ENCODE measurements at regions of chr3 and their contacts with region 1.

Region 1: DNA sequence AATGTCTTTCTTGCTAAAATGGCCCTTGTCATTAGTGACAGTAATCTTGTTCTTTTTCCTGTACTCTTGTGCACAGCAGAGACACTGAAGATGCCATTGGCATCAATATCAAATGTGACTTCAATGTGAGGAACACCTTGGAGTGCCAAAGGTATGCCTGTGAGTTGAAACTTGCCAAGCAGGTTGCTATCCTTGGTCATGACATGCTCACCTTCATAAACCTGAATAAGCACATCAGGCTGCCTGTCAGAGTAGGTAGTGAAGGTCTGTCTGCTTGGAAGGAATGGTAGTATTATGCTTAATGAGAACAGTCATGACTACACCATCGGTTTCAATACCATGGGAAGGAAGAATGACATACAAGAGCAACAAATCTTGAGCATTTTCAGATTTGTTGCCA is 6.3 kb upstream of the RAB5A start:
- DNase-seq: no peak
- ATAC-seq: no peak
- H3K4me3 ChIP-seq: no peak overlapping the region
- H3K27ac ChIP-seq: no peak overlapping the region
- H3K4me1 ChIP-seq: peaks cover 0 to under 1% (median 0%) of the 10 kb centered on the region in 12 donors
- H3K27me3 ChIP-seq: no peaks in the 10 kb centered on the region
- CTCF ChIP-seq: no peak
- POLR2A ChIP-seq: no peak

Region 2: DNA sequence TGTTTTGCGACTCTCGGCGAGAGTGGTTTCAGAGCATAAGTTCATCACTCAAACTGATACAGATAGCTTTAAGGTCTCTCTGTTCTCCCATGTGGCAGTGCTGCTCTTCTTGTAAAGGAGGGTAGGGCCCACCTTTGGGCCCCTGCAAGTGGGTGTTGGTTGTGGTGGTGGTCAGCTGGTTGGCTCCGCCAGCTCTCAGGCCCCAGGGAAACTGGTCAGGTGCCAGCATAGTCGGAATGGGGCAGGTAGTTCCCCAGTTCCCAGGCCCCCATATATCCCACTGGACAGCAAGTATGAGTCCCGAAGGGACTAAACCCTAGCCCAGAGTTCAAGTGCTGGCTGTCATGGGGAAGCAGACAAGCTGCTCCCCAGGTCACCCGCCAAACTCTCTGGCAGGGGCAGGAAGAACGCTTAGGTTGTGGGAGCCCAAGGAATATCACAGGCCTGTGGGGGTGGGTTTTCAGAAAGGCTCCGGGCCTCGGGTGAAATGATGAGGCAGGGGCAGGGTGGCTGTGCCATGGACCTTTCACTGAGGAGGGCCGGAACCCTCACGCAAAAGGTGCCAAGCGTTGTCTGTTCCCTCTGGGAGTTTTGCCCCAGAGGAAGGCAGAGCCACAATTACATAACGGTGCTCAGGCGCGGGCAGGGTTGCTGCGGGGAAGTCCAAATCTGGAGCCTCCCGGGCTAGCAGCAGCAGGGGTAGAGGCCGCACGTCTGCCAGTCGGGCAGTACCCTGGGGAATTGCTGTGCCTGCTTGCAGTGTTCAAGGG is 191.7 kb before region 1 on chr3:
- intact Hi-C with region 1: no loop called
- DNase-seq: no peak
- ATAC-seq: no peak
- H3K4me3 ChIP-seq: no peak overlapping the region
- H3K27ac ChIP-seq: no peak overlapping the region
- H3K4me1 ChIP-seq: no peaks in the 10 kb centered on the region
- H3K27me3 ChIP-seq: peaks cover 0 to 2% (median 0%) of the 10 kb centered on the region in 9 donors
- CTCF ChIP-seq: no peak
- POLR2A ChIP-seq: no peak

Region 3: GRCh38 chr3:19891740-19892139 is 48.9 kb before region 1 on chr3:
- intact Hi-C with region 1: loop called in 5 of 10 experiments (anchors 5 kb)
- DNase-seq: no peak
- ATAC-seq: no peak
- H3K4me3 ChIP-seq: no peak overlapping the region
- H3K27ac ChIP-seq: no peak overlapping the region
- H3K4me1 ChIP-seq: peaks cover 0 to 18% (median 8%) of the 10 kb centered on the region in 12 donors
- H3K27me3 ChIP-seq: no peaks in the 10 kb centered on the region
- CTCF ChIP-seq: no peak
- POLR2A ChIP-seq: no peak

Region 4: DNA sequence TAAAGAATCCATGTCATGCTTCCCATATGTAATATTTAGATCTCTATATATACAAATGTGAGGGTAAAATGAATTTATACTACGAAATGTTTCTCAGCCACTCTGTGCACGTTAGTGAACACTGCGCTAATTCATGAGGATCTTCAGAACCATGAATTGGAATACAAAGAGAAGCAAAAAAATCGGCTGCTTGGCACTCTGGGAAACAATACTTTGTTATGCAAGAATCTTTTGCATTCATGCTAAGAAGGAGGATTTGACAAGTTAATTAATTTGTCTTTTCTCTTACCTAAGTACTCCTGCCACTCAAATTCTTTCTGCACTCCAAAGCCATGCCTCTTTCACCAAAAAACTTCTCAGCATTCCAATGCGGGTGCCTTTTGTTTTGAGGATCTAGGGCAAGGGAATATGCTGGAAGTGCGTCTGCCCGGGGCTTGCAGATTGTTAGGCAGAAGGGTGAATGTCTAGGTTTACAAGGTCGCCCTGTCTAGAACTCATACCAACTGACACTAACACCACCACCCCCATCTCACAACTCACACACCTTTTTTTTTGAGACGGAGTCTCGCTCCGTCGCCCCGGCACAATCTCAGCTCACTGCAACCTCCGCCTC is 88.3 kb after region 1 on chr3:
- intact Hi-C with region 1: no loop called
- DNase-seq: no peak
- ATAC-seq: no peak
- H3K4me3 ChIP-seq: no peak overlapping the region
- H3K27ac ChIP-seq: no peak overlapping the region
- H3K4me1 ChIP-seq: peaks cover 0 to 16% (median 6%) of the 10 kb centered on the region in 12 donors
- H3K27me3 ChIP-seq: no peaks in the 10 kb centered on the region
- CTCF ChIP-seq: no peak
- POLR2A ChIP-seq: no peak

Region 5: DNA sequence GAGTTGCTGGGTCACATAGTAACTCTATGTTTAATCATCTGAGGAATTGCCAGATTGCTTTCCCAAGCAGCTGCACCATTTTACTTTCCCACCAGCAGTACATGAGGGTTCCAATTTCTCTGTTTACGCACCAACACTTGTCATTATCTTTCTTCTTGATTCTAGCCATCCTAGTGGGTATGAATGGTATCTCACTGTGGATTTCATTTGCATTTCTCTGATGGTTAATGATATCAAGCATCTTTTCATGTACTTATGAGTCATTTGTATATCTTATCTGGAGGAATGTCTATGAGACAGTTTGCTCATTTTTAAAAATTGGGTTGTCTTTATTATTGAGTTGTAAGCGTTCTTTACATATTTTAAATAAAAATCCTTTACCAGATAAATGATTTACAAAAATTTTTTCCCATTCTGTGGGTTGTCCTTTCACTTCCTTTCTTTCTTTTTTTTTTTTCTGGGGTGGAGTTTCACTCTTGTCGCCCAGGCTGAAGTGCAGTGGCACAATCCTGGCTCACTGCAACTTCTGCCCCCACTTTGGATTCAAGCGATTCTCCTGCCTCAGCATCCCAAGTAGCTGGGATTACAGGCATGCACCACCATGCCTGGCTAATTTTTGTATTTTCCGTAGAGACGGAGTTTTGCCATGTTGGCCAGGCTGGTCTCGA is 254.3 kb after region 1 on chr3:
- intact Hi-C with region 1: no loop called
- DNase-seq: no peak
- ATAC-seq: no peak
- H3K4me3 ChIP-seq: no peak overlapping the region
- H3K27ac ChIP-seq: no peak overlapping the region
- H3K4me1 ChIP-seq: no peaks in the 10 kb centered on the region
- H3K27me3 ChIP-seq: no peaks in the 10 kb centered on the region
- CTCF ChIP-seq: no peak
- POLR2A ChIP-seq: no peak

Region 6: GRCh38 chr3:20280257-20280656 is 339.6 kb after region 1 on chr3:
- intact Hi-C with region 1: no loop called
- DNase-seq: no peak
- ATAC-seq: no peak
- H3K4me3 ChIP-seq: no peak overlapping the region
- H3K27ac ChIP-seq: no peak overlapping the region
- H3K4me1 ChIP-seq: no peaks in the 10 kb centered on the region
- H3K27me3 ChIP-seq: no peaks in the 10 kb centered on the region
- CTCF ChIP-seq: no peak
- POLR2A ChIP-seq: no peak